Cardiac septum (tissue), 1 donor: ENCODE measurements at regions of chr15 and their contacts with region 1.

Region 1: DNA sequence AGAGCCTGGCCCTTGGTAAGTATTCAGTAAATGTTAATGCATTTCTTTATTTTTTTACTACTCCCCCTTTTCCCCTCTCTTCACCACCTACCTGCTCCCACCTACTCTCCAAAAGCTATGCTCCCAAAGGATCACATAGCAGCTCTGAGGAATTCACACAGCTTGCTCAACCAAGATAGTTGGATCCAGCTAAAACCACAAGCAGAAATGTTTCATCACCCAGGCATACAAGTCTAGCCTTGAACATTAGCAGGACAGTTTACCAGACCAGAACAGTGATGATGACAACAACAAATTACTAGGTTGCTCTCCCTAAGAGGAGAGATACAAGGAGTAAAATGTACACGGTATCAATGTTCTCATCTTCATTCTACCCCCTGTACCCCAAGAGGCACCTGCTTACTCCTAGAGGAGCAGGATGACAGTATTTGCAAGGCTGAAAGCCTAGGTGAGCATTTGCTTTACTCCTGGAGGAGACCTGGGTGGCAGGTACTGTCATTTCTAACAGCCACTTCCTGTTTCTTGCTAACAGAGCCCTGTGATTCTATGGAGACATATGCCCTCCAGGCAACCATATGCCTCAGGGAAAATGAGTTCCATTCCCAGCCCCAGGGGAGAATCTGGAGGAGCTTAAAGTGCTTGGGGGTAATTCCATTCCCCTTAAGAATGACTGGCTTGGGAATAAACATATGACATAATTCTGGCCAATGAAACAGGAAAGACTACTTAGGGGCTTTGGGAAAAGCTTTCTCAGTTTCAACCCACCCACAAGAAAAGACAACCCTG is 237.5 kb downstream of the NTRK3 start:
- DNase-seq: no peak

Region 2: GRCh38 chr15:87672309-87673288 is 346.4 kb before region 1 on chr15:
- intact Hi-C with region 1: loop called (anchors 10 kb)
- DNase-seq: no peak

Region 3: DNA sequence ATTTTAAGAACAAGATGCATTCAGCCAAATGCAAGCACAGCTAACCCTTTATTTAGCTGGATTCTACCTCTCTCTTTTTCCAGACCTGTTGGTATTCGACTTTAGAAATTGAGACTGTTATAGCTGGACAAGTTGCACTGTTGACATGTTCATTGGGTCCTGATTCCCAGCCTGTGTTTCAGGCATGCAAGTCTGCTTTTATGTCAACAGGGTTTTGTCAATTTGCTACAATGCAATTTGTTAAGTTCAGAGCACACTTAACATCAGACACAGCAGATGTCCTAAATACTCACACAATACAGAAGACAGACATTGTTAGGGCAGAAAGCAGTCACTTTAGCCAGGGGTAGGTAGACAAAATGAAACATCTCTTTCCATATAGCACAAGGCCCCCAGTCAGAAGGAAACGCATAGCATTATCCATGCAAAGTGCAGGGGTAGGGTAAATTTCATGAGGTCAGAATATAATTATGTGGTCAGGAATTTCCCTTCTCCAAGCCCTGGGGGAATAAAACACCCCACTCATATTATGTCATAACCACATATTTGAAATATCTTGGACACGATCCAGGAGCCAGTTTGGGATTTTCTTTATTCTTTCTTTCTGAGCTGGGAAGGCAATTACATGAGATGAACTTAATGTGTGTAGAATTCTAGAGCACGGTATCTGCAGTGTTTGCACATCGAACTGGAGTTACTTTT is 266.6 kb before region 1 on chr15:
- intact Hi-C with region 1: no loop called
- DNase-seq: no peak

Region 4: GRCh38 chr15:87877114-87877810 is 141.8 kb before region 1 on chr15:
- intact Hi-C with region 1: no loop called
- DNase-seq: no peak